Caki2 (cell line): ENCODE measurements at regions of chr1 and their contacts with region 1.

Region 1: DNA sequence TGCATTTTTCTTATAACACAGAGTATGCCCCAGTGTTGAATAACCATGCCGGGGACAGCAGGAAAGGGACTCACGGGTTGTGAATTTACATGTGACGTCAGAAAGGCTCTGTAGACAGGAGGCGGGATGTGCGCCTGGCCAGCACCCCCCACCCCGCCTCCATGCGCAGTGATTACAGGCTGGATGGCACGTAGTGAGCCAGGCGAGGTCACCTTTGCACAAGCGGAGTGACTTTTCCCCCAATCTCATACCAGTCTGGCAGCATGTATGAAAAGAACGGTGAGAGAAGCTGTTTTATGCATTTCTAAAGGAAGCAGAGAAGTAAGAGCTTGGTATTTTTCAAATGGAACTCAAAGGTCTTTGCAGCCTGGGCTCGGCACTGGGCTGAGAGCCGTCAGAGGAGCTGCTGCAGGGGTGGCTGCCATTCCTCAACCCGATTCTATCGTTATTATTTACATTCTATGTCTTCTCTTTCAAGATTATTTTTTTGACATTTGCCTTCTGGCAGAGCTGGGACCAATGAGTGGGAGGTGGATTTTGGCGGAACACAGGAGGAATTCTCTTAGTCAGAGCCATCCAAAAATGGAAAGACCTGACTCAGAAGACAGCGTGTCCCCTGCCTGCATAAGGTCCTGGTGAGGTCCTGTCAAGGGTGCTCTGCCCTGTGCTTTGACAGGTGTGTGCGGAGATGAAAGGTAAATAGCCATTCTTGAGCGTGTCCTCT is 115.6 kb upstream of the SLC45A1 start:
- DNase-seq: peak; percentile 91

Region 2: DNA sequence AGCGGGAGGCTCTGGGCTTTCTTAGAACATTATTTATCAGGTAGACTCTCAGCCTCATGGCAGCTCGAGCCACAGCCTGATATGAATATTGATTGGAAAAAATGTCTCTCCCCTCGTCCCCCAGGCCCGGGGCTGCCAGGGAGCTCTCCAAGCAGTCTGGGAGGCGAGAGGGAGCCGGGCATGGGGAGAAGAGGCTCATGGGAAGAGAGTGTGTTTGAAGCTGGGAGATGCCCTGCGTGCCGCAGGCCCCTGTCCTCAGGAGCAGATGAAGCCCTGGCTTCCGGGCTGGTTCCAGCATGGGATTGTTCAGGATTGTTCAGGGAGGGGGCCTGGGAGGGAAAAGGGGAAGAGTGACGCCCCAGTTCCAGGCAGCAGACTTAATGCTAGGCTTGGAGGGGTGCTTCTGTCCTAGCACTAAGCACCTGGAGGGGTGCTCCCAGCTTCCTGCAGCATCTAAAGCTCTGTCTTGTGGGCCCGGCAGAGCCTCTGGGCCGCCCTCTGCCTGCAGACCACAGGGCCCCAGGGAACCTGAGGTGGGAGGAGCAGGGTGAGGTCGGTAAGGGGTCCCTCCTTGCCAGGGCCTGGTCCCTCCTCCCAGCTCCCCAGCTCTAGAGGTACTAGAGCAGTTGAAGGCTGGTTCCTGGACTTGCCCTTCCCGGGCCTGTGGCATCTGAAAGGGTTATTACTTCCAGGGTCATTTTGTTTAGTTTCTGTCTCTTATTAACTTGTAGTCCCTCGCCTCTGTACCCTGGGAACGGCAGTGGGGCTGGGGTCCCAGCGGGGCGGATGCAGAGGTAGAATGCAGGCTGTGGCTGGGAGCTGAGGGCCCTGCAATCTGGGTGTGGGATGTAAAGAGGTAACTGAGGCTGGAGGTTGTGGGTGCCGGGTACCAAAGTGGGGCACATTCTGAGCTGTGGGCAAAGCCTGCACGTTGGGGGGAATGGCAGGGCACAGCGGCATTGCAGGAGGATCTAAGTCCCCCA is 766.0 kb before region 1 on chr1:
- in situ Hi-C with region 1: no loop called
- DNase-seq: no peak

Region 3: GRCh38 chr1:8302081-8302956 is 100.0 kb after region 1 on chr1:
- in situ Hi-C with region 1: loop called (anchors 10 kb)
- DNase-seq: no peak